Activated B cell treated with CpG ODN at 0.5 μM for 24 hours (primary cell): ENCODE measurements at regions of chr7 and their contacts with region 1.

Region 1: GRCh38 chr7:143380255-143380645 is 895 bp upstream of the ZYX start:
- DNase-seq: peak; percentile 82
- ATAC-seq: peak; percentile 50
- H3K4me3 Mint-ChIP-seq: peak overlapping the region; percentile 86
- H3K27ac Mint-ChIP-seq: peak overlapping the region; percentile 85
- H3K4me1 Mint-ChIP-seq: peaks cover 32% of the 10 kb centered on the region
- H3K27me3 Mint-ChIP-seq: no peaks in the 10 kb centered on the region
- CTCF ChIP-seq: peak; percentile 73

Region 2: DNA sequence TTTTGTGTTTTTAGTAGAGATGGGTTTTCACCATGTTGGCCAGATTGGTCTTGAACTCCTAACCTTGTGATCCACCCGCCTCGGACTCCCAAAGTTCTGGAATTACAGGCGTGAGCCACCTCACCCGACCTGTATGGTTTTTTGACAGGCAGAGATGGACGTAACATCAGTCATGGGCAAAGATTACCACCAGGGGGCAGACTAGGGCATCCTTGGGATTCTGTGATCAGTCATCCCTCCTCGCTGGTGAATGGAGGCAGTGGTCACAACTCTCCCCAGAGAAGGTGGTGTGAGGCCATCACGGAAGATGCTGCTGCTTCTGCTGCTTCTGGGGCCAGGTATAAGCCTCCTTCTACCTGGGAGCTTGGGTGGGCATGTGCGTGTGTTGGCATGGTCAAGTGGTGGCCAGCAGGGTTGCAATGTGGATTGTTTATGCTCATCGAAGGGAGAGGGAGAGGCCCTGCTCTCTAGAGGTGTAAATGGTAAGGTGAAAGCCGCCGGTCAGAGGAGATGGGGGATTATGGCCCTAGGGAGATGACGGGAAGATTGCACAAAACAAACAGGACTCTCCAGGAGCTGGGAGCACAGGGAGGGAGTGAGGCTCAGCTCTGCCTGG is 753.7 kb before region 1 on chr7:
- CTCF ChIA-PET with region 1: no interaction called
- POLR2A ChIA-PET with region 1: no interaction called
- intact Hi-C with region 1: no loop called
- DNase-seq: no peak
- ATAC-seq: peak; percentile 62
- H3K4me3 Mint-ChIP-seq: no peak overlapping the region
- H3K27ac Mint-ChIP-seq: no peak overlapping the region
- H3K4me1 Mint-ChIP-seq: peaks cover 3% of the 10 kb centered on the region
- H3K27me3 Mint-ChIP-seq: peaks cover 24% of the 10 kb centered on the region
- CTCF ChIP-seq: no peak

Region 3: GRCh38 chr7:142811154-142811737 is 569.0 kb before region 1 on chr7:
- CTCF ChIA-PET with region 1: no interaction called
- POLR2A ChIA-PET with region 1: interaction called, 4 read pairs
- intact Hi-C with region 1: loop called (anchors 2 kb)
- DNase-seq: no peak
- ATAC-seq: no peak
- H3K4me3 Mint-ChIP-seq: peak overlapping the region; percentile 17
- H3K27ac Mint-ChIP-seq: peak overlapping the region; percentile 98
- H3K4me1 Mint-ChIP-seq: peaks cover 85% of the 10 kb centered on the region
- H3K27me3 Mint-ChIP-seq: no peaks in the 10 kb centered on the region
- CTCF ChIP-seq: no peak

Region 4: DNA sequence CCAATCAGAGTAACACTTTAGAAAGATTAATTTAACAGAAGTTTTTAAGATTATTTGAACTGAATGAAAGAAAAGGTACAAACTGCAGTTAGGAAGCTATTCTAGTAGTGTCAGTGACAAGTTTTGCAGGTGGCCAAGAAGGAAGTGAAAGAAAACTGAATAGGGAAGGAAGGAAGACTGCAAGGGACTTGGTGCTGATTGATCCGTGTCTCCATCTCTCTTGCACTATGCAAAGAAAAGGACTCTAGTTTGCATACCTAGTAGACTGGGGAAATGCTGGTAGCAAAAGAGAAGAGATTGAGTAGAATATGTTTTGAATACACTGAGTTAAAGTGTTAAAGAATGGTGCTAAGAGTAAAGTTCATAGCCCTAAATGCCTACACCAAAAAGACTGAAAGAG is 295.1 kb before region 1 on chr7:
- CTCF ChIA-PET with region 1: no interaction called
- POLR2A ChIA-PET with region 1: no interaction called
- intact Hi-C with region 1: loop called (anchors 2 kb)
- DNase-seq: no peak
- ATAC-seq: peak; percentile 98
- H3K4me3 Mint-ChIP-seq: peak overlapping the region; percentile 67
- H3K27ac Mint-ChIP-seq: peak overlapping the region; percentile 88
- H3K4me1 Mint-ChIP-seq: peaks cover 68% of the 10 kb centered on the region
- H3K27me3 Mint-ChIP-seq: no peaks in the 10 kb centered on the region
- CTCF ChIP-seq: no peak

Region 5: GRCh38 chr7:143287935-143288826 is 92.1 kb before region 1 on chr7 and contains the start of gene CASP2:
- CTCF ChIA-PET with region 1: interaction called, 5 read pairs
- POLR2A ChIA-PET with region 1: interaction called, 23 read pairs
- intact Hi-C with region 1: loop called (anchors 1 kb)
- DNase-seq: peak; percentile 97
- ATAC-seq: peak; percentile 91
- H3K4me3 Mint-ChIP-seq: peak within 1 kb of the TSS; percentile 96
- H3K27ac Mint-ChIP-seq: peak within 1 kb of the TSS; percentile 89
- H3K4me1 Mint-ChIP-seq: peaks cover 54% of the 10 kb centered on the region
- H3K27me3 Mint-ChIP-seq: no peaks in the 10 kb centered on the region
- CTCF ChIP-seq: no peak
- total RNA-seq, gene CASP2: 59.5 and 62.2 TPM in 2 replicates

Region 6: GRCh38 chr7:143362131-143363015 is 17.9 kb before region 1 on chr7 and contains the start of gene FAM131B:
- CTCF ChIA-PET with region 1: interaction called, 4 read pairs
- POLR2A ChIA-PET with region 1: no interaction called
- intact Hi-C with region 1: loop called (anchors 1 kb)
- DNase-seq: no peak
- ATAC-seq: peak; percentile 53
- H3K4me3 Mint-ChIP-seq: peak within 1 kb of the TSS; percentile 82
- H3K27ac Mint-ChIP-seq: peak within 1 kb of the TSS; percentile 6
- H3K4me1 Mint-ChIP-seq: peaks cover 11% of the 10 kb centered on the region
- H3K27me3 Mint-ChIP-seq: peaks cover 51% of the 10 kb centered on the region
- CTCF ChIP-seq: no peak
- total RNA-seq, gene FAM131B: not detected in 2 replicates

Region 7: GRCh38 chr7:143901668-143902331 is 521.5 kb after region 1 on chr7 and contains the start of gene TCAF1:
- CTCF ChIA-PET with region 1: no interaction called
- POLR2A ChIA-PET with region 1: interaction called, 6 read pairs
- intact Hi-C with region 1: loop called (anchors 1 kb)
- DNase-seq: peak; percentile 85
- ATAC-seq: peak; percentile 96
- H3K4me3 Mint-ChIP-seq: peak within 1 kb of the TSS; percentile 94
- H3K27ac Mint-ChIP-seq: peak within 1 kb of the TSS; percentile 88
- H3K4me1 Mint-ChIP-seq: peaks cover 23% of the 10 kb centered on the region
- H3K27me3 Mint-ChIP-seq: no peaks in the 10 kb centered on the region
- CTCF ChIP-seq: no peak
- total RNA-seq, gene TCAF1: 12.0 and 13.4 TPM in 2 replicates